ENCODE measurements at regions of chr19 and their contacts with region 1.

Region 1: GRCh38 chr19:2269244-2269947 is 12.6 kb downstream of the PEAK3 start:
- DNase-seq: peak; percentile 99
- ATAC-seq: peak; percentile 92
- H3K4me3 ChIP-seq: peak overlapping the region; percentile 49 to 96
- H3K27ac ChIP-seq: peak overlapping the region in 1 of 2 donors; percentile 93
- H3K4me1 ChIP-seq: no peaks in the 10 kb centered on the region
- H3K27me3 ChIP-seq: no peaks in the 10 kb centered on the region

Region 2: DNA sequence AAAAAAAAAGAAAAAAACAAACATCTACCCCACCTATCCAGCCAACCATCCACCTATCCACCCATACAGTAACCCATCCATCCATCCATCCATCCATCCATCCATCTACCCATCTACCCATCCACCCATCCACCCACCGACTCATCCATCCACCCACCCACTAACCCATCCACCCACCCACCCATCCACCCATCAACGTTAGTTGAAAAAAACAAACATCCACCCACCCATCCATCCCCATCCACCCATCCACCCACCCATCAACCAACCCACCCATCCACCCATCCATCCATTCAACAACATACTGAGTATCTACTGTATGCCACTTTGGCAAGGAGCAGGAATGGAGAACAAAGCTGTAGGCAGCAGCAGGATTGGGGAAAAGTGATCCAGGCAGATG is 111.9 kb before region 1 on chr19:
- intact Hi-C with region 1: loop called (anchors 2 to 5 kb)
- DNase-seq: no peak
- ATAC-seq: no peak
- H3K4me3 ChIP-seq: no peak overlapping the region
- H3K27ac ChIP-seq: no peak overlapping the region
- H3K4me1 ChIP-seq: no peaks in the 10 kb centered on the region
- H3K27me3 ChIP-seq: no peaks in the 10 kb centered on the region

Region 3: GRCh38 chr19:2328401-2329148 is 59.2 kb after region 1 on chr19 and contains the starts of genes LSM7 and SPPL2B:
- intact Hi-C with region 1: loop called in 1 of 2 experiments (anchors 5 kb)
- DNase-seq: peak; percentile 93 to 97
- ATAC-seq: peak; percentile 94
- H3K4me3 ChIP-seq: peak within 1 kb of the TSS; percentile 75 to 80
- H3K27ac ChIP-seq: peak within 1 kb of the TSS in 1 of 2 donors; percentile 4
- H3K4me1 ChIP-seq: no peaks in the 10 kb centered on the region
- H3K27me3 ChIP-seq: no peaks in the 10 kb centered on the region
- total RNA-seq, gene LSM7: 43.7 to 45.8 TPM
- total RNA-seq, gene SPPL2B: 29.3 to 49.1 TPM

Region 4: GRCh38 chr19:4058034-4058692 is 1788.8 kb after region 1 on chr19:
- intact Hi-C with region 1: loop called in 1 of 2 experiments (anchors 5 kb)
- DNase-seq: peak; percentile 94 to 97
- ATAC-seq: peak; percentile 87
- H3K4me3 ChIP-seq: no peak overlapping the region
- H3K27ac ChIP-seq: peak overlapping the region; percentile 57 to 70
- H3K4me1 ChIP-seq: no peaks in the 10 kb centered on the region
- H3K27me3 ChIP-seq: no peaks in the 10 kb centered on the region

Measured in aorta (tissue), 5 donors.